Heart left ventricle (tissue), 16 donors: ENCODE measurements at regions of chr18 and their contacts with region 1.

Region 1: GRCh38 chr18:2036086-2036485 is 535.2 kb downstream of the METTL4 start:
- DNase-seq: no peak
- ATAC-seq: no peak
- H3K4me3 ChIP-seq: no peak overlapping the region
- H3K27ac ChIP-seq: no peak overlapping the region
- H3K4me1 ChIP-seq: peaks cover 0 to 3% (median 0%) of the 10 kb centered on the region in 12 donors
- H3K27me3 ChIP-seq: no peaks in the 10 kb centered on the region
- CTCF ChIP-seq: no peak
- POLR2A ChIP-seq: no peak

Region 2: GRCh38 chr18:1965016-1965415 is 71.1 kb before region 1 on chr18:
- intact Hi-C with region 1: no loop called
- DNase-seq: no peak
- ATAC-seq: no peak
- H3K4me3 ChIP-seq: no peak overlapping the region
- H3K27ac ChIP-seq: no peak overlapping the region
- H3K4me1 ChIP-seq: no peaks in the 10 kb centered on the region
- H3K27me3 ChIP-seq: no peaks in the 10 kb centered on the region
- CTCF ChIP-seq: no peak
- POLR2A ChIP-seq: no peak

Region 3: GRCh38 chr18:2056606-2057005 is 20.5 kb after region 1 on chr18:
- intact Hi-C with region 1: loop called in 1 of 10 experiments (anchors 2 kb)
- DNase-seq: no peak
- ATAC-seq: no peak
- H3K4me3 ChIP-seq: no peak overlapping the region
- H3K27ac ChIP-seq: no peak overlapping the region
- H3K4me1 ChIP-seq: no peaks in the 10 kb centered on the region
- H3K27me3 ChIP-seq: no peaks in the 10 kb centered on the region
- CTCF ChIP-seq: no peak
- POLR2A ChIP-seq: no peak